ENCODE measurements at regions of chr2 and their contacts with region 1.

Region 1: DNA sequence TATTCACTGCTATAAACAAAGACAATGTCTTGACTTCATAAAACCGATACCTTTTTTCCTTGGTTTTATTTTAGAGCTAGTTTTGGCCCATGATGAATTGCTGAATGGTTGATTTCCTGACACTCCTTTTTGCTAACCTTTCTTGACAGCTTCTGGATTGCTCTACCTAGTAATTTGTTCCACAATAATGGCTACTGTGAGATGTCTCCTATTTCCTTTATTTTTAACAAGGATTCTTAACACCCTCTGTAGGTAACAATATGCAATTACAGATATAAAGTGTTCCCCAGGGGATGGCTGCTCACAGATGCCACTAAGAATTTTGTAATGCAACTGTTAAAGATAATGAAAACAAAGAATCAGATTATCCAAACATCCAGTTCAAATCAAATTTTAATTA is 100.8 kb upstream of the ATP5MC3 start:
- DNase-seq: peak; percentile 53
- ATAC-seq: peak; percentile 73
- H3K4me3 ChIP-seq: no peak overlapping the region
- H3K27ac ChIP-seq: no peak overlapping the region
- H3K4me1 ChIP-seq: no peaks in the 10 kb centered on the region
- H3K27me3 ChIP-seq: peaks cover 48% of the 10 kb centered on the region
- CTCF ChIP-seq: peak; percentile 69

Region 2: DNA sequence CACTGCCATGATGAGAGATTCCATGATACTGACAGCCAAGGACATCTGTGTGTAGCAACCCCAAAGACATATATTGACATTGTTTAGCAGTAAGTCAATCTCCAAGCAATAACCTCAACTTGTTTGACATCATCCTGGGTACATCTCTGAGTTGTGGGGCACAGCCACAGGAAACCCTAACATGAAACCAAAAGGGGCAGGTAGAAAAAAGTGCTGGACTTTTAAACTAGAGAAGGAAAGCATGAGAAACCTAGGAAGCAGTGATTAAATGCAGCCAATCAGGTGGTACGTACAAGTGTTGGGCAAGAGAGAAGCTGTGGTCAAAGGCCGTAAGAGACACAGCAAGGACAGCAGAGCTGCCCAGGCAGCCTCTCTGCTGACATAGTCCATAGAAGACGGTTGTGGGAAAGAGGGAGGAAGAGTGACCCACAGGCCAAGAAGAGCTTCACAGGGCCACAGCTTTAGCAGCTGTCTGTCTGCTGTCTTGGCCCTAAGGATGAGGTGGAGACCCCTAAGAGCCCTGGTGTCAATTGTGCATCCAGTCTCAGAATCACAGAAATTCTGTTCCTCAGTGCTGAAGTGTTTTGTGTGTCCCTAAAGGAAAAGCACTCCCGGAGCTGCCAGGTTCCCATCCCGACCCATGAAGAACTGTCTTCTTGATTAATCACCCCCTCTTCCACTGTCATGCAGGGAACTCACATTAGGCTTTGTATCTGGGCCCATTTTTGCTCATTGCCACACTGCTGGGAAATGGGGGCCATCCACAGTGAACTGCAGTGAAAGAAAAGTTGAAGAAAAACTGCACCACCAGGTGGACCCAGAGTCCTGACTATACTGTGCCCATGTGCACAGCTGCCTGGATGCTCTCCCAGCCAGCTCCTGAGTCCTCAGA is 251.7 kb before region 1 on chr2:
- CTCF ChIA-PET with region 1: no interaction called
- POLR2A ChIA-PET with region 1: no interaction called
- intact Hi-C with region 1: loop called (anchors 1 kb)
- DNase-seq: peak; percentile 69
- ATAC-seq: peak; percentile 97
- H3K4me3 ChIP-seq: no peak overlapping the region
- H3K27ac ChIP-seq: no peak overlapping the region
- H3K4me1 ChIP-seq: peaks cover 7% of the 10 kb centered on the region; the same call in 1 of the 2 replicates
- H3K27me3 ChIP-seq: no peaks in the 10 kb centered on the region
- CTCF ChIP-seq: peak; percentile 66

Region 3: DNA sequence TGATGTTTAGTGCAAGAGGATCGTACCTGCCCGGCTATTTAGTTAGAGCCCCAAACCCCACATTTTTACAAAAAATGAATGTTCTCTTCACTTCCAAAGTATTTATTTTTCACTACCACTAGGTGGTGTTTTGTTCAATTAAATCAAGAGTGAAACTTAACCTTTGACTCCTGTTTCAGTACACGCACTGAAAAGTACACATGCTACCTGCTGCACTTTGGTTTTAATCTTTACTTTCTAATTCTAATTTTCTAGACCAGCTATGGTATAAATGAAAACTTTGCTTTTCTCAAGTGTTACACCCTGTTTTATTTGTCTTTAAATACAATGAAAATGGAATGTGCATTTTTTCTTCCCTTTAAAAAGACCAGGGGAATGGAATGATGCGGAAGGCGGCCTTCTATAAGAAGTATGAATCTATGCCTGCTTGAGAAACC is 245.7 kb before region 1 on chr2:
- CTCF ChIA-PET with region 1: no interaction called
- POLR2A ChIA-PET with region 1: no interaction called
- intact Hi-C with region 1: loop called (anchors 1 kb)
- DNase-seq: peak; percentile 58
- ATAC-seq: peak; percentile 49; the same call in 1 of the 2 replicates
- H3K4me3 ChIP-seq: no peak overlapping the region
- H3K27ac ChIP-seq: no peak overlapping the region
- H3K4me1 ChIP-seq: no peaks in the 10 kb centered on the region
- H3K27me3 ChIP-seq: no peaks in the 10 kb centered on the region
- CTCF ChIP-seq: peak; percentile 69

Region 4: DNA sequence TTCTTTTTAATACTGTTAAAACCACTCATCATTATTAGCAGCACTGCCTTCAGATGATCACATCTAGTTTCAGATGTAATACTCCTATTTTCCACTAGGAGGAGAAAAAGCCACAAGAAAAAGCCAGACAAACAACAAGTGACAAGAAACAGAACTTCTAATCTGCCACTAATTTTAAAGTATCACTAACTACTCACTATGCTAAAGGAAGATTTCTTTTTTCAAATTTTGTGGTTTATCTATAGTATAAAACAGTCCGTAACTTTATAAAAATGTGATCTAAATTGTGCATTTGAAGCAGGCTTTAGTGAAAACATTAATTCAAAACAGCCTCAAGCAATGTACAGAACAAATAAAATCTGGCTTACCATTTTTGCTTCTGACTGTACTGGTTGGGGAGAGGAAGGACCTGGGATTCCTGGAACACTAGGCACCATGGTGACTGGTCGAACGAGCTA is 171.1 kb before region 1 on chr2:
- CTCF ChIA-PET with region 1: interaction called, 3 read pairs
- POLR2A ChIA-PET with region 1: interaction called, 8 read pairs
- intact Hi-C with region 1: loop called (anchors 2 kb)
- DNase-seq: peak; percentile 75
- ATAC-seq: peak; percentile 81
- H3K4me3 ChIP-seq: no peak overlapping the region
- H3K27ac ChIP-seq: no peak overlapping the region
- H3K4me1 ChIP-seq: no peaks in the 10 kb centered on the region
- H3K27me3 ChIP-seq: no peaks in the 10 kb centered on the region
- CTCF ChIP-seq: peak; percentile 86

Region 5: GRCh38 chr2:175203621-175204496 is 78.4 kb before region 1 on chr2:
- CTCF ChIA-PET with region 1: interaction called, 4 read pairs
- POLR2A ChIA-PET with region 1: no interaction called
- intact Hi-C with region 1: loop called (anchors 1 kb)
- DNase-seq: peak; percentile 72
- ATAC-seq: peak; percentile 99
- H3K4me3 ChIP-seq: peak overlapping the region; percentile 13; the same call in 1 of the 2 replicates
- H3K27ac ChIP-seq: no peak overlapping the region
- H3K4me1 ChIP-seq: no peaks in the 10 kb centered on the region
- H3K27me3 ChIP-seq: 0 out of 2 replicates have a peak, but pooled peaks cover 3% of the 10 kb centered on the region
- CTCF ChIP-seq: peak; percentile 80

Region 6: DNA sequence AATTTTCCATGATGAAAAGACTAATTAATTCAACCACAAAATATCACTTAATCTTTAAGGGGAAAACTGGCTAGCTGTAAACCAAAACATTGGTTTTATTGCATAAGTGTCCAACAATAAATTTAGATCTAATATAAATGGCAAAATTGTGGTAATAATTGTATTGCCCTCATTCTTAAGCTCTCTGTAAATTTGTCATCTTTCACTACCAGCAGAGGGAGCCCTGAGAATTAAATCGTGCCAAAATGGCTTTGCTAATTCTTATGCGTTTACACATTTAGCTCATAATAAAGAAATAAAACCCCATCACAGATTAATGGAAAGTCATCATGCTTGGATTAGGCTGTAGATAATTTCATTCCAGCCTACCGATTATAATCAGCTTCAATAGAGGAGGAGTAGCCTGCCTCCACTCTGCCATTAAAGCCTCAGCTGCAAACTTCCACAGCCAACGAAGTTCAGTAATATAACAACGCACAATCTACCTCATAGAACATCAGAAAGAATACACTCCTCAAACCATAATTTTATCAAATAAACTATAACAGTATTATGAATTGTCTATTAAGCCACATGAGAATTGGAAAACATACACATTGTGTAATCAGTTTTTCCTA is 30.8 kb before region 1 on chr2:
- CTCF ChIA-PET with region 1: no interaction called
- POLR2A ChIA-PET with region 1: interaction called, 3 read pairs
- intact Hi-C with region 1: loop called (anchors 1 kb)
- DNase-seq: peak; percentile 71
- ATAC-seq: peak; percentile 65
- H3K4me3 ChIP-seq: no peak overlapping the region
- H3K27ac ChIP-seq: no peak overlapping the region
- H3K4me1 ChIP-seq: no peaks in the 10 kb centered on the region
- H3K27me3 ChIP-seq: peaks cover 21% of the 10 kb centered on the region
- CTCF ChIP-seq: peak; percentile 82

Region 7: DNA sequence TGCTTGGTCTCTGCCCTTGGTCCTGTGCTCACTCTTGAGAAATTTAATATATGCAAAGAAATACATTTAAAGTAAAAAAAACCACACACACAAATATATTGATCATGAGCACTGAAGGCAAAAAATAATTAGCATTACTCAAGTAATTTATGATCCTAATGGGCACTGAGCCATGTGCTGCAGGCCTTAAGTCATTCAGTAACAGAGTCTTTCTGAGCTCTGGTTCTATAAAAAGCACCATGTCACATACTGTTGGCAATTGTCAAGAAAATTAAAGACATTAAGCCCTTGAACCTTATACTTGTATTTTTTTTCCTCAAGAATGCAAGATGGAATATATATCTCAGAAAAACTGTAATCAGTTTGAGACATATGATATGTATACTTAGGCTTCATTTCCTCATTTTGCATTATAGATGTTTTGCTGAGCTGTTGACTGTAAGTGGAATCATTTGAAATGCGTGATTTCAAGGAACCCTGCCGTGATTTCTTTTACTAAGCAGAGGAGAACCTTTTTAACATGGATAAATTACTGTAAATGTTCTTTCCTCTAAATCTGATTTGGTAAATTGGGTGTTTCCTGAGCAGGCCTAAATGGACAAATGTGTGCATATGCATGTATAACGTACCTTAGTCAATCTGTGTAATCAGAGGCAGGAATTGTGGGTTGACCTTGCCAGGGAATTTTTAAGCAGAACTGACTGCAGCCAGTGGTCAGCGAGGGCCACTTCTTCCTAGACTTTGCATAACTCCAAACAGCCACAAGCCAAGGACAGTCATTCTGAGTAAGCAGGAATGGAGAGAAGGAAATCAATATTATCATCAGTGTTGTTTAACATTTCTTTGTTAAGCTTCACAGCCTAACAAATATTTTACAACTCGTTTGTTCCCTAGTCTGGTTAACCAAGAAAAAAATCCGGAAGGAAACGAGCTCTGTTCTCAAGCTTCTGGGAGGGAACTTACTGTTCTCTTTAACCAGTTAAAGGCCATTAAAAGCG is 90.7 kb after region 1 on chr2:
- CTCF ChIA-PET with region 1: no interaction called
- POLR2A ChIA-PET with region 1: no interaction called
- intact Hi-C with region 1: no loop called
- DNase-seq: peak; percentile 80
- ATAC-seq: peak; percentile 93
- H3K4me3 ChIP-seq: no peak overlapping the region
- H3K27ac ChIP-seq: peak overlapping the region; percentile 33
- H3K4me1 ChIP-seq: peaks cover 23% of the 10 kb centered on the region
- H3K27me3 ChIP-seq: no peaks in the 10 kb centered on the region
- CTCF ChIP-seq: no peak

Region 8: GRCh38 chr2:175383286-175383685 is 101.0 kb after region 1 on chr2:
- CTCF ChIA-PET with region 1: no interaction called
- POLR2A ChIA-PET with region 1: no interaction called
- intact Hi-C with region 1: no loop called
- DNase-seq: no peak
- ATAC-seq: no peak
- H3K4me3 ChIP-seq: no peak overlapping the region
- H3K27ac ChIP-seq: no peak overlapping the region
- H3K4me1 ChIP-seq: no peaks in the 10 kb centered on the region
- H3K27me3 ChIP-seq: no peaks in the 10 kb centered on the region; the same call in 1 of the 2 replicates
- CTCF ChIP-seq: no peak